Activated naive CD4-positive, alpha-beta T cell treated with anti-CD3 and anti-CD28 coated beads for 36 hours (primary cell): ENCODE measurements at regions of chr7 and their contacts with region 1.

Region 1: DNA sequence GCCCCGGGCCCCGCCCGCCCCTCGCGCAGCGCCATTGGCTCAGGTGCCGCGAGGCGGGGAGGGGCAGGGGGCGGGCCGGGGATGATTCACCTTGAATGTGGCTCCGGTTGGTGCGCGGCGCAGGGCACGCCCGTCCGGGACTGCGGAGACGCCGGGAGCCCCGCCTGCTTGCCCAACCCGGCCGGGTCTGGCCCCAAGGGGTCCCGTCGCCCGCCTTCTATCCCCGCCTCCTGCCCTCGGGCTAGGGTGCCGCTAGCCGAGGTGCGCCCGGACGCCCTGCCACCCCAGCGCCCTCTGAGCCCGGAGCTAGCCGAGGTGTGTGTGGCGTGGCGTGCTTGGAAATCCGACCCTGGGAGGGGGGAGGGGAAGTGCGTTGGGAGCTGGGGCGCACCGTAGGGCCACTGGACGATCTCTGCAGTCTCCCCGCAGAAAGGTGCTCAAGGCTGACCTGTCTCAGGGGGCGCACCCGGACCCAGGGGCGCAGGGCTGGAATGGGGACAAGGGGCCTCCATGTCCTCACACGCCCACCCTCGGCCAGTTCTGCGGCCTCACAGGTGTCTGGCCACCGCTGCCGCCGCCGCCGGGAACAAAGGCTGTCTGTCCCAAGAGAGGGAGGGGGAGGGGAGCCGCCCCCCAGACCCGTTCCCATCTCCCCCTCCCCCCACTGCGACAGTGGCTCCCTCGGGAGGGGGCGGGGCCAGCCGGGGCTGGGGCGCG is 168.9 kb downstream of the NRF1 start:
- DNase-seq: peak; percentile 91
- H3K4me3 Mint-ChIP-seq: peak overlapping the region; percentile 73
- H3K27ac Mint-ChIP-seq: no peak overlapping the region
- H3K4me1 Mint-ChIP-seq: peaks cover 40% of the 10 kb centered on the region
- H3K27me3 Mint-ChIP-seq: peaks cover 57% of the 10 kb centered on the region

Region 2: GRCh38 chr7:129433847-129434674 is 346.4 kb before region 1 on chr7 and contains the start of gene STRIP2:
- CTCF ChIA-PET with region 1: no interaction called
- intact Hi-C with region 1: no loop called
- DNase-seq: peak; percentile 94
- H3K4me3 Mint-ChIP-seq: peak within 1 kb of the TSS; percentile 89
- H3K27ac Mint-ChIP-seq: peak within 1 kb of the TSS; percentile 92
- H3K4me1 Mint-ChIP-seq: peaks cover 28% of the 10 kb centered on the region
- H3K27me3 Mint-ChIP-seq: peaks cover 7% of the 10 kb centered on the region
- total RNA-seq, gene STRIP2: 71.4 to 76.0 TPM

Region 3: DNA sequence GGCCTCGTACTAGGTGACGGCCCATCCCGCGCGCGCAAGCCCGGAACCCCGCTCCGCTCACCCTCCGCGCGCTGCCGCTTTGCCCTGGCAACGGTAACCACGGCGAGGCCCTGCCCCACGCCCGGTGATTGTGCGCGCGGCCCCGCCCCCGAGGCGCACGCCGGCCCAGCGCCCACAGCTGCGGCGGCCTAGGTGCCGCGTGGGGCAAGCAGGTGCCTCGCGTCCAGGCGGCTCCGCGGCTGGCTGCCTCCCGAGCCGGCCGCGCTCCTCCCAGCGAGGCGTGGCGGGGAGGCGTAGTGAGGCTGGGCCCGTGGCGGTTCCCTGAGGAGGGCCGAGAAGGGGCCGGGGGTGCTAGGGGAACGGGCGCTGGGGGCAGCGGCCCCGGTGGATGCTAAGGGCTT is 278.0 kb before region 1 on chr7 and contains the start of gene SMKR1:
- CTCF ChIA-PET with region 1: no interaction called
- intact Hi-C with region 1: loop called (anchors 5 kb)
- DNase-seq: peak; percentile 86
- H3K4me3 Mint-ChIP-seq: peak within 1 kb of the TSS; percentile 75
- H3K27ac Mint-ChIP-seq: no peak within 1 kb of the TSS
- H3K4me1 Mint-ChIP-seq: peaks cover 9% of the 10 kb centered on the region
- H3K27me3 Mint-ChIP-seq: no peaks in the 10 kb centered on the region
- total RNA-seq, gene SMKR1: 0.99 to 1.2 TPM

Region 4: GRCh38 chr7:129804890-129805719 is 24.7 kb after region 1 on chr7:
- CTCF ChIA-PET with region 1: no interaction called
- intact Hi-C with region 1: no loop called
- DNase-seq: no peak
- H3K4me3 Mint-ChIP-seq: no peak overlapping the region
- H3K27ac Mint-ChIP-seq: no peak overlapping the region
- H3K4me1 Mint-ChIP-seq: no peaks in the 10 kb centered on the region
- H3K27me3 Mint-ChIP-seq: no peaks in the 10 kb centered on the region

Region 5: DNA sequence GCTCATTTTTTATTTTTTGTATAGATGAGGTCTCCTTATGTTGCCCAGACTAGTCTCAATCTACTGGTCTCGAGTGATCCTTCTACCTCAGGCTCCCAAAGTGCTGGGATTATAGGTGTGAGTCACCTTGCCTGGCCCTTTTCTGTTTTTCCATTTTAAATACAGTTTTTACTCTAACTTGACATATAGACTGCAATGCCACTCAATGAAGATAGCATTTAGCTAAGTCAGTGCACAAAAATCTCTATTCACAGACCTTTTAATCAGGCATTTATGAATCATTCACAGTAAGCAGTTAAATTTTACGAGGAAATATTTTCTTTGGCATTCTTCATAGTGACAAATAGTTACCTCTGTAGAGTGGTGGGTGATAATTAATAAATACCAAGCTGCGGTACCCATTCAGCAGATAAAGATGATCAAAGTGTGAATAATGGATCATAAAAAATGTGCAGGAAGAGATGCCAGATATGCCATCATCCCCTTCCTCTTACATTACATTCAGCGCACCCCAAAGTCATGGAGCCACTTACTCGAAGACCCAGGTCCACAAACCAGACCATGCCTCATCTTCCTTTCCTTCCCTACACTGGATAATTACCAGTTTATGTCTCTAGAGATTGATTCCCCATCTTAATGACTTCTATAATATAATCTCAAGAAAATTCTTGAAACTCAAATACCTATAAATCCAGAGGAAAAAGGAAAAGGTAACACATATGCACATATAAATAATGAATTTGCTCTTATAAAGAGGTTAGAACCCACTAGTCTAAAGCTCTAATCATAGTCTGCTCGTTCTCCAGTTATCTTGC is 116.4 kb after region 1 on chr7:
- CTCF ChIA-PET with region 1: no interaction called
- intact Hi-C with region 1: no loop called
- DNase-seq: no peak
- H3K4me3 Mint-ChIP-seq: no peak overlapping the region
- H3K27ac Mint-ChIP-seq: no peak overlapping the region
- H3K4me1 Mint-ChIP-seq: peaks cover 26% of the 10 kb centered on the region
- H3K27me3 Mint-ChIP-seq: no peaks in the 10 kb centered on the region